CD8-positive, alpha-beta memory T cell (primary cell): ENCODE measurements at regions of chr7 and their contacts with region 1.

Region 1: DNA sequence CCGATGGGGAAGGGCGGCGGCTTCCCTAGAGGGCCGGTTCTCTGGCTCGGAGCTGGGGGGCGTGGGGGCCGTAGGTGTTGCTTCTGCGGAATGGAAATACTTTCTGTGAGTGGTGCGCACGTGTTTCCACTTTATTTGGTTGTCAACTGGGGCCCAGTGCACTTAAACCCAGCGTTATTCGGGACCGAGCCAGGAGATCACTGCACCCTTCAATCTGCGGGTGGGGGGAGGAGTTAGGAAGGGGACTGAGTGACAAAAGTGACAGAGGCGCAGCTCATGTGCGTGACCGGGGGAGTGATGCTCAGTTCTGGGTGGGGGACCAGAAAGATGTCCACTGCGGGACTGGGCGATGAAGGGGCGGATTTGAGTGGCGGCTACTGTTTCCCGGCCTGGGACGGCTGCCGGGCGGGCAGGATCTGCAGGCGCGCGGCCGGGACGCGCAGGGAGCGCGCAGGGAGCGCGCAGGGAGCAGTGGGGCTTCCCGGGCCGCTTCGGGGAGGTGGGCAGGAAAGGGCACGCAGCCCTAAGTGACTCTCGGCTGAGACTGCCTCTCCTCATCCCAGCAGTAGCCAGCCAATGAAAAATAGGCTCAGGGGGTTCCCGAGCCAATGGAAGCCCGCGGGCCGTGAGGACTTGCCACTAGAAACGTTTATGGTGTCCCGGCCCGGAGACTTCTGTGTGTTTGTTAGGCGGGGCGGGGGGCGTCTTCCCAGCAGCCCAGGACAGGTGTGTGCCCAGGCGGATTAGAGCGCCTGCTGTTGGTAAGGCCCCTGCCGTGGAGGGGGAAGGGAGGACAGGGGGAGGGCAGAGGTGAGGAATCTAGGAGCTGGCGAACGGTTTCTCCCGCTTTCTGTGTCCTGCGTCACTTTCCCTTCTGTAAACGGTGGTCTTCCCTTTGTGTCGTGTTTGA is 54.3 kb upstream of the KDM7A start:
- DNase-seq: peak; percentile 29 to 73 (median 51)
- H3K4me3 ChIP-seq: peak overlapping the region; percentile 82
- H3K4me3 Mint-ChIP-seq: peak overlapping the region; percentile 90 to 96 (median 92)
- H3K27ac ChIP-seq: peak overlapping the region; percentile 86
- H3K27ac Mint-ChIP-seq: peak overlapping the region; percentile 92 to 99 (median 97)
- H3K4me1 ChIP-seq: peaks cover 28% of the 10 kb centered on the region
- H3K4me1 Mint-ChIP-seq: peaks cover 30 to 44% (median 38%) of the 10 kb centered on the region in 3 donors
- H3K27me3 ChIP-seq: no peaks in the 10 kb centered on the region
- H3K27me3 Mint-ChIP-seq: no peaks in the 10 kb centered on the region

Region 2: DNA sequence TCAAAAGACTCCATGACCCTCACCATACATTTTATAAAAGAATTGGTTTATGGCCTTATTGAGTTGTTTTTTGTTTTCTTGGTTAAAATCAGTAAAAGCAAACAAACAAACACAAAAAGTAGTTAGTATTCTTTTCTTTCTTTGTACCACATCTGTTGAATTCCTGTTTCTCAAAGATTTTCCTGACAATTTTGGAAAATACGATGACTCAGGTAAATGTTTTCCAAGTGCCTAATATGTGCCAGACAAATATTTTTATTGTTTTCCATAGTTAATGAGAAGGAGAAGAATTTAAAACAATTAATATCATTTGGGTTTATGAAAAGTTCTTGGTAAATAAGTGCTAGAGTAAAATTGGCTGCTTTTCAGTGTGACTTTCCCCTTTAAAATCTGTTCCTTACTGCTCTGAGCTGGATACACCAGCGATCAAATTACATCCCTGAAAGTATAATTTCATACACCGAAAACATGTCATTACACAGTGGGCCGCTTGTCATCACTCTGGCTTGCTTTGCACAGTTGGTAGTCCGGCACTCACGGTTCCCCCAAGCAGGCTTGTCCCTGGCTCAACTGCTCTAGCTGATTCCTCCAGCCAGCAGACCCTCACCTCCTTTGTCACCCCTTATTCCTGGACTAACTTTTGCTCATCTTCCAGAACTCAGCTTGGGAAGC is 321.6 kb before region 1 on chr7:
- CTCF ChIA-PET with region 1: no interaction called
- POLR2A ChIA-PET with region 1: no interaction called
- DNase-seq: no peak
- H3K4me3 ChIP-seq: no peak overlapping the region
- H3K4me3 Mint-ChIP-seq: no peak overlapping the region
- H3K27ac ChIP-seq: no peak overlapping the region
- H3K27ac Mint-ChIP-seq: no peak overlapping the region
- H3K4me1 ChIP-seq: no peaks in the 10 kb centered on the region
- H3K4me1 Mint-ChIP-seq: no peaks in the 10 kb centered on the region
- H3K27me3 ChIP-seq: no peaks in the 10 kb centered on the region
- H3K27me3 Mint-ChIP-seq: peaks cover 15 to 46% of the 10 kb centered on the region in 2 donors

Region 3: DNA sequence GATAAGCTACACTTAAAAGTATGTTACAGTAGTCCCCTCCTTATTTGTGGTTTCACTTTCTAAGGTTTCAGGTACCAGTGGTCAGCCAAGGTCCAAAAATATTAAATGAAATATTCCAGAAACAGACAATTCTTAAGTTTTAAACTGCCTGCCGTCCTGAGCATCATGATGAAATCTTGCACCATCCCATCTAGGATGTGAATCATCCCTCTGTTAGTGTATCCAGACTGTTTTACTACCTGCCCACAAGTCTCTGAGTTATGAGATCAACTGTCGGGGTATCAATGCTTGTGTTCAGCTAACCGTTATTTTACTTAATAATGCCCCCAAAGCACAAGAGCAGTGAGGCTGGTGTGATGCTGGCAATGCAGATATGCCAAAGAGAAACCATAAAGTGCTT is 65.7 kb before region 1 on chr7:
- CTCF ChIA-PET with region 1: no interaction called
- POLR2A ChIA-PET with region 1: no interaction called
- DNase-seq: no peak
- H3K4me3 ChIP-seq: no peak overlapping the region
- H3K4me3 Mint-ChIP-seq: peak overlapping the region in 4 of 7 donors; percentile 6 to 23 (median 18)
- H3K27ac ChIP-seq: no peak overlapping the region
- H3K27ac Mint-ChIP-seq: peak overlapping the region in 1 of 8 donors; percentile 61
- H3K4me1 ChIP-seq: peaks cover 57% of the 10 kb centered on the region
- H3K4me1 Mint-ChIP-seq: peaks cover 65 to 94% (median 87%) of the 10 kb centered on the region in 3 donors
- H3K27me3 ChIP-seq: no peaks in the 10 kb centered on the region
- H3K27me3 Mint-ChIP-seq: no peaks in the 10 kb centered on the region

Region 4: DNA sequence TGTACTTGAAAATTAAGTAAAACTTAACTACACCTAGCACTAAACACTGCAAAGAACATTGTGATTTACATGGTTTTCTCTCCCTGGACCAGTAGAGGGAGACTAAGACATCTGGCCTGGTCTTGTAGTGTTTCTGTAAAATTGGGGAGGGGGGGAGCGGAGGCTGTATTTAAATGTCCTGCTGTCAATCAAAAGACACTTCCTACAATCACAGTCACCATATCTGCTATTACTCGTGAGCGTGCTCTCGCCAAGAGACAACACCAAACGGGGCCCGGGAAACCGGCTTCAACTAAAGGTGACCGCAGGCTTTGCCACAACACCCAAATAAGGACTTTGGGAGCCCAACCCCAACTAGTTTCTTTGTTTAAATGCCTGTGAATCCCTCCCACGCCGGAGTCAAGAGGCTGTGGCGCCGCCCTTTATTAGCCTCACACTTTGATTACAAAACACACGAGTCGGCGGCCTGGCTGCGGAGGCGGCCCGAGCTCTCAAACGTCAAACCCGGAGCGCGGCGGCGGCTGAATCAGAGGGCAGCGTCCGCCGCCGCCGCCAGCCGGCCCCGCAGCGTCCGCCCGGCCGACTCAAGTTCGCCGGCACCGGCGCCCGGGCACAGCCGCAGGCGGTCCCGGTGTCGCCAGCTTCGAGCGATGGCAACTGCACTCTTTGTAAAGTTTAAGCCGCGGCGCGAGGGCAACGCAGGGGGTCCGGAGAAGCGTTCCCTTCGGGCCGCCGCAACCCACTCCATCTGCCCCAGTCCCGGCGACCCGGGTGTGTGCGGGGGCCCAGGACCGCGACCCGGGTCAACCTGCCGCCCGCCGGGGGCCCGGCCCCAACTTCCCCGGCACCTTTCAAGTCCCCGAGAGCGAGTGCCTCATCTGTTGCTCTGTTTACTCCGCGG is 55.6 kb before region 1 on chr7:
- CTCF ChIA-PET with region 1: interaction called, 30 read pairs
- POLR2A ChIA-PET with region 1: interaction called, 103 read pairs
- DNase-seq: peak; percentile 85 to 96 (median 93)
- H3K4me3 ChIP-seq: peak overlapping the region; percentile 55
- H3K4me3 Mint-ChIP-seq: peak overlapping the region; percentile 87 to 94 (median 89)
- H3K27ac ChIP-seq: peak overlapping the region; percentile 86
- H3K27ac Mint-ChIP-seq: peak overlapping the region; percentile 83 to 96 (median 93)
- H3K4me1 ChIP-seq: peaks cover 39% of the 10 kb centered on the region
- H3K4me1 Mint-ChIP-seq: peaks cover 42 to 57% (median 46%) of the 10 kb centered on the region in 3 donors
- H3K27me3 ChIP-seq: no peaks in the 10 kb centered on the region
- H3K27me3 Mint-ChIP-seq: peaks cover 0 to 6% of the 10 kb centered on the region in 2 donors

Region 5: GRCh38 chr7:140201393-140201792 is 29.7 kb before region 1 on chr7:
- CTCF ChIA-PET with region 1: no interaction called
- POLR2A ChIA-PET with region 1: interaction called, 10 read pairs
- DNase-seq: no peak
- H3K4me3 ChIP-seq: no peak overlapping the region
- H3K4me3 Mint-ChIP-seq: no peak overlapping the region
- H3K27ac ChIP-seq: no peak overlapping the region
- H3K27ac Mint-ChIP-seq: peak overlapping the region in 1 of 8 donors; percentile 51
- H3K4me1 ChIP-seq: no peaks in the 10 kb centered on the region
- H3K4me1 Mint-ChIP-seq: peaks cover 0 to 4% (median 2%) of the 10 kb centered on the region in 3 donors
- H3K27me3 ChIP-seq: no peaks in the 10 kb centered on the region
- H3K27me3 Mint-ChIP-seq: peaks cover 0 to 7% of the 10 kb centered on the region in 2 donors

Region 6: GRCh38 chr7:140249036-140249806 is 18.1 kb after region 1 on chr7:
- CTCF ChIA-PET with region 1: no interaction called
- POLR2A ChIA-PET with region 1: interaction called, 16 read pairs
- DNase-seq: no peak
- H3K4me3 ChIP-seq: no peak overlapping the region
- H3K4me3 Mint-ChIP-seq: no peak overlapping the region
- H3K27ac ChIP-seq: no peak overlapping the region
- H3K27ac Mint-ChIP-seq: peak overlapping the region in 2 of 8 donors; percentile 44 to 86
- H3K4me1 ChIP-seq: peaks cover 22% of the 10 kb centered on the region
- H3K4me1 Mint-ChIP-seq: peaks cover 19 to 26% (median 22%) of the 10 kb centered on the region in 3 donors
- H3K27me3 ChIP-seq: no peaks in the 10 kb centered on the region
- H3K27me3 Mint-ChIP-seq: peaks cover 2 to 3% of the 10 kb centered on the region in 2 donors

Region 7: GRCh38 chr7:140263277-140263676 is 32.2 kb after region 1 on chr7:
- CTCF ChIA-PET with region 1: interaction called, 6 read pairs
- POLR2A ChIA-PET with region 1: interaction called, 27 read pairs
- DNase-seq: peak in 3 of 5 donors; percentile 67 to 75 (median 75)
- H3K4me3 ChIP-seq: peak overlapping the region; percentile 11
- H3K4me3 Mint-ChIP-seq: peak overlapping the region; percentile 1 to 89 (median 63)
- H3K27ac ChIP-seq: no peak overlapping the region
- H3K27ac Mint-ChIP-seq: peak overlapping the region; percentile 80 to 97 (median 93)
- H3K4me1 ChIP-seq: peaks cover 42% of the 10 kb centered on the region
- H3K4me1 Mint-ChIP-seq: peaks cover 34 to 51% (median 49%) of the 10 kb centered on the region in 3 donors
- H3K27me3 ChIP-seq: no peaks in the 10 kb centered on the region
- H3K27me3 Mint-ChIP-seq: peaks cover 0 to 3% of the 10 kb centered on the region in 2 donors

Region 8: DNA sequence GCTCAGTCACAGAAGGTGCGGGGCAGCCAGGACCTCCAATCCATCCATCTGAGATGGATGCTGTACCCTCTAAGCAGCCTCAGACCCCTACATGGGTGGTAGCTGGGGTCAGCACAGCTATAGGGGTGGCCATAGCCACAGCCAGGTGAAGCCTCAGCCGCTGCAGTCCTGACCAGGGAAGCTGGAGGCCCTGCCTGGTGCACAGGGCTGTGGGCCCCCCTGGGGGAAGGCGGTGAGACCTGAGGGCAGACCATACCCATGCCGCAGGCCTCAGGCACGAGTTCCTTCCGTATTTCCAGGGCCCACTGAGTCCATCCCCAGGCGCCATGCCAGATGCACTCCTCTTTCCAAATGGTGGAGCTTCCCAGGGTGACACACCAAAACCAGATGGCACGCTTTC is 42.3 kb after region 1 on chr7:
- CTCF ChIA-PET with region 1: no interaction called
- POLR2A ChIA-PET with region 1: no interaction called
- DNase-seq: no peak
- H3K4me3 ChIP-seq: no peak overlapping the region
- H3K4me3 Mint-ChIP-seq: no peak overlapping the region
- H3K27ac ChIP-seq: no peak overlapping the region
- H3K27ac Mint-ChIP-seq: no peak overlapping the region
- H3K4me1 ChIP-seq: peaks cover 9% of the 10 kb centered on the region
- H3K4me1 Mint-ChIP-seq: peaks cover 10 to 17% (median 10%) of the 10 kb centered on the region in 3 donors
- H3K27me3 ChIP-seq: no peaks in the 10 kb centered on the region
- H3K27me3 Mint-ChIP-seq: peaks cover 0 to 2% of the 10 kb centered on the region in 2 donors

Region 9: GRCh38 chr7:140304191-140304799 is 73.2 kb after region 1 on chr7:
- CTCF ChIA-PET with region 1: interaction called, 13 read pairs
- POLR2A ChIA-PET with region 1: interaction called, 3 read pairs
- DNase-seq: peak; percentile 5 to 69 (median 58)
- H3K4me3 ChIP-seq: no peak overlapping the region
- H3K4me3 Mint-ChIP-seq: no peak overlapping the region
- H3K27ac ChIP-seq: no peak overlapping the region
- H3K27ac Mint-ChIP-seq: peak overlapping the region; percentile 6 to 87 (median 64)
- H3K4me1 ChIP-seq: peaks cover 5% of the 10 kb centered on the region
- H3K4me1 Mint-ChIP-seq: peaks cover 4 to 8% (median 5%) of the 10 kb centered on the region in 3 donors
- H3K27me3 ChIP-seq: no peaks in the 10 kb centered on the region
- H3K27me3 Mint-ChIP-seq: no peaks in the 10 kb centered on the region